ENCODE measurements at regions of chr11 and their contacts with region 1.

Region 1: DNA sequence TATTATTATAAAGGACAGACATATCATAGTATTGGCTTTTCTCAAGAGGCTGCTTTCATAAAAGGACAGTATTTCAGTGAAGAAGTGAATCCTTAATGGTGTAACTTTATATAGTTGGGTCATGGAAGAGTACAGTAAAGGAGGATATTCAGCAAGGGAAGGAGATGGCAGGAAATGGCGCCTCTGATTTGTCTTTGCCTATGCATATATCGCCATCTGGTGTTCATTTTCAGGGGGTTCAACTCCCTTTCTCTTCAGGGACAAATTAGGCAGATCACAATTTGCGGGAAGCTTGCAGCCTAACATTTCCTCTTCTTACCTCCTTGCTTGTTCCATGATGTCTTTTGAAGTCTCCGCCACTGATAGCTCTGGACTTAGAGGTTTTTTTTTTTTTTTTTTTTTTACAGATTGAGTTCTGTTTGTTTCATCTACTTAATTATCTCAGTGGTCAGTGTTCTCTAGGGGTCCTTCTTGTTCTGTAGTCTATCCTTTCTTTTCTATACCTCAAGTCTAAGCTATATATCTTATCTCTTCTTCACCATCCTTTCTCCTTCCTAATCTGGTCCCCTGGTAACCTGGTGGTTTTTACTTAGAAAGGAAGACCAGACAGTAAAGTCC is 21.8 kb upstream of the RRM1 start:
- DNase-seq: peak; percentile 47 to 50
- H3K4me3 ChIP-seq: no peak overlapping the region
- H3K27ac ChIP-seq: no peak overlapping the region
- H3K4me1 ChIP-seq: peaks cover 9 to 11% of the 10 kb centered on the region in 2 donors
- H3K27me3 ChIP-seq: no peaks in the 10 kb centered on the region
- CTCF ChIP-seq: peak; percentile 43 to 96 (median 85)
- POLR2A ChIP-seq: no peak

Region 2: DNA sequence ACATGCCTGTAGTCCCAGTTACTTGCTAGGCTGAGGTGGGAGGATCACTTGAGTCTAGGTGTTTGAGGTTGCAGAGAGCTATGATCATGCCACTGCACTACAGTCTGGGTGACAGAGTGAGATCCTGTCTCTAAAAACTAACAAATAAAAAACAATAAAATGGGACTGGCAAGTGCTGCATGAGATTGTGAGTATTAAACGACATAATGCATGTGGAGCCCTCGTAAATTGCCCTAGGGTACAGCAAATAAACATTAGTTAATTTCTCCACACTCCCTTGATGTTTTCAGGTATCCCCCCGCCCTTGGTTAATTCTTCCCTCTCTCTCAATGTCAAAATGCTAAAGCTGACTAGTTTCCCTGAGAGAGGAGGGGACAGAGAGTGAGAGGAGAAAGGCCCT is 227.1 kb before region 1 on chr11:
- intact Hi-C with region 1: loop called (anchors 2 kb)
- DNase-seq: no peak
- H3K4me3 ChIP-seq: no peak overlapping the region
- H3K27ac ChIP-seq: no peak overlapping the region
- H3K4me1 ChIP-seq: peaks cover 0 to 5% of the 10 kb centered on the region in 2 donors
- H3K27me3 ChIP-seq: no peaks in the 10 kb centered on the region
- CTCF ChIP-seq: no peak
- POLR2A ChIP-seq: no peak

Region 3: GRCh38 chr11:3854977-3855807 is 217.6 kb before region 1 on chr11 and contains the start of gene STIM1:
- intact Hi-C with region 1: loop called (anchors 2 kb)
- DNase-seq: peak; percentile 94 to 96
- H3K4me3 ChIP-seq: peak within 1 kb of the TSS; percentile 78 to 96 (median 93)
- H3K27ac ChIP-seq: peak within 1 kb of the TSS; percentile 95 to 98 (median 95)
- H3K4me1 ChIP-seq: peaks cover 41 to 47% of the 10 kb centered on the region in 2 donors
- H3K27me3 ChIP-seq: no peaks in the 10 kb centered on the region
- CTCF ChIP-seq: peak; percentile 87 to 99 (median 94)
- POLR2A ChIP-seq: peak; percentile 75 to 85
- total RNA-seq, gene STIM1: 54.3 to 89.2 (median 71.0) TPM

Region 4: DNA sequence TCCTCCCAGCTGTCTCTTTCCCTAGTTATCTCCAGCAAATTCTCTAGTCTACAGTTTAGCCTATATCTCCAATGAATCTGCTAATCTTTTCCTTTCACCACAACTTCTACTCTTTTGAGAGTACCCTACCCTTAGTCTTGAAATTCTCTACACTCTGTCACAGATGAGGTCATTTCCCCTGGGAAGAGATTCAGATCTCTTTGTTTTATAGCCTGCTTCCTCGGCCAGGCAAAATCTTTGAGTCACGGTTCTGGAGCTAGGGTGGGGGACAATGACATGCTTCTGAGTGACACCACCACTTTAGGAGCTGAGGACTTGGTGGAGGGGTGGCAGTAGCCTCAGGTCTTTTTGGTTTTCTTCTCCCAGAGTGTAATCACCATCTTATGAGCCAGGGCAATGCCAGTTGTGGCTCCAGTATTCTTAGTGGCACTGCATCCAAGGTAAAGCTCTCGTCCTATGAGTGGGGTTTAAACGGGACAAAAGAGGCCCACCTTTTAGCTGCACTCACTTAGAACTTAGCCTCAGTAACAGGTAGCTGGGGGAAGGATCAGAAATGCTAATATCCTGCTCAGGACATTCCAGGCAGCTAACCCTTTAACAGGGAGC is 76.7 kb before region 1 on chr11:
- intact Hi-C with region 1: no loop called
- DNase-seq: no peak
- H3K4me3 ChIP-seq: no peak overlapping the region
- H3K27ac ChIP-seq: no peak overlapping the region
- H3K4me1 ChIP-seq: peaks cover 0 to 12% of the 10 kb centered on the region in 2 donors
- H3K27me3 ChIP-seq: no peaks in the 10 kb centered on the region
- CTCF ChIP-seq: no peak
- POLR2A ChIP-seq: no peak